CD8-positive, alpha-beta memory T cell (primary cell): ENCODE measurements at regions of chr14 and their contacts with region 1.

Region 1: GRCh38 chr14:52961060-52961639 is 10.3 kb upstream of the FERMT2 start:
- DNase-seq: peak; percentile 16 to 72 (median 53)
- H3K4me3 ChIP-seq: no peak overlapping the region
- H3K4me3 Mint-ChIP-seq: peak overlapping the region in 3 of 7 donors; percentile 21 to 33 (median 30)
- H3K27ac ChIP-seq: no peak overlapping the region
- H3K27ac Mint-ChIP-seq: peak overlapping the region in 7 of 8 donors; percentile 47 to 91 (median 73)
- H3K4me1 ChIP-seq: no peaks in the 10 kb centered on the region
- H3K4me1 Mint-ChIP-seq: peaks cover 11 to 16% (median 14%) of the 10 kb centered on the region in 3 donors
- H3K27me3 ChIP-seq: no peaks in the 10 kb centered on the region
- H3K27me3 Mint-ChIP-seq: no peaks in the 10 kb centered on the region

Region 2: GRCh38 chr14:52824507-52824906 is 136.6 kb before region 1 on chr14:
- CTCF ChIA-PET with region 1: interaction called, 111 read pairs
- POLR2A ChIA-PET with region 1: no interaction called
- DNase-seq: no peak
- H3K4me3 ChIP-seq: no peak overlapping the region
- H3K4me3 Mint-ChIP-seq: peak overlapping the region in 1 of 7 donors; percentile 36
- H3K27ac ChIP-seq: no peak overlapping the region
- H3K27ac Mint-ChIP-seq: peak overlapping the region in 1 of 8 donors; percentile 26
- H3K4me1 ChIP-seq: no peaks in the 10 kb centered on the region
- H3K4me1 Mint-ChIP-seq: peaks cover 0 to 8% (median 6%) of the 10 kb centered on the region in 3 donors
- H3K27me3 ChIP-seq: no peaks in the 10 kb centered on the region
- H3K27me3 Mint-ChIP-seq: peaks cover 5 to 15% of the 10 kb centered on the region in 2 donors

Region 3: GRCh38 chr14:52873694-52874093 is 87.5 kb before region 1 on chr14:
- CTCF ChIA-PET with region 1: no interaction called
- POLR2A ChIA-PET with region 1: no interaction called
- DNase-seq: no peak
- H3K4me3 ChIP-seq: no peak overlapping the region
- H3K4me3 Mint-ChIP-seq: no peak overlapping the region
- H3K27ac ChIP-seq: no peak overlapping the region
- H3K27ac Mint-ChIP-seq: no peak overlapping the region
- H3K4me1 ChIP-seq: no peaks in the 10 kb centered on the region
- H3K4me1 Mint-ChIP-seq: no peaks in the 10 kb centered on the region
- H3K27me3 ChIP-seq: no peaks in the 10 kb centered on the region
- H3K27me3 Mint-ChIP-seq: peaks cover 0 to 10% of the 10 kb centered on the region in 2 donors

Region 4: GRCh38 chr14:52918486-52918885 is 42.7 kb before region 1 on chr14:
- CTCF ChIA-PET with region 1: interaction called, 19 read pairs
- POLR2A ChIA-PET with region 1: no interaction called
- DNase-seq: peak in 3 of 5 donors; percentile 49 to 76 (median 74)
- H3K4me3 ChIP-seq: no peak overlapping the region
- H3K4me3 Mint-ChIP-seq: peak overlapping the region in 4 of 7 donors; percentile 6 to 49 (median 36)
- H3K27ac ChIP-seq: peak overlapping the region; percentile 40
- H3K27ac Mint-ChIP-seq: peak overlapping the region; percentile 66 to 99 (median 94)
- H3K4me1 ChIP-seq: peaks cover 21% of the 10 kb centered on the region
- H3K4me1 Mint-ChIP-seq: peaks cover 28 to 38% (median 34%) of the 10 kb centered on the region in 3 donors
- H3K27me3 ChIP-seq: no peaks in the 10 kb centered on the region
- H3K27me3 Mint-ChIP-seq: peaks cover 0 to 7% of the 10 kb centered on the region in 2 donors

Region 5: DNA sequence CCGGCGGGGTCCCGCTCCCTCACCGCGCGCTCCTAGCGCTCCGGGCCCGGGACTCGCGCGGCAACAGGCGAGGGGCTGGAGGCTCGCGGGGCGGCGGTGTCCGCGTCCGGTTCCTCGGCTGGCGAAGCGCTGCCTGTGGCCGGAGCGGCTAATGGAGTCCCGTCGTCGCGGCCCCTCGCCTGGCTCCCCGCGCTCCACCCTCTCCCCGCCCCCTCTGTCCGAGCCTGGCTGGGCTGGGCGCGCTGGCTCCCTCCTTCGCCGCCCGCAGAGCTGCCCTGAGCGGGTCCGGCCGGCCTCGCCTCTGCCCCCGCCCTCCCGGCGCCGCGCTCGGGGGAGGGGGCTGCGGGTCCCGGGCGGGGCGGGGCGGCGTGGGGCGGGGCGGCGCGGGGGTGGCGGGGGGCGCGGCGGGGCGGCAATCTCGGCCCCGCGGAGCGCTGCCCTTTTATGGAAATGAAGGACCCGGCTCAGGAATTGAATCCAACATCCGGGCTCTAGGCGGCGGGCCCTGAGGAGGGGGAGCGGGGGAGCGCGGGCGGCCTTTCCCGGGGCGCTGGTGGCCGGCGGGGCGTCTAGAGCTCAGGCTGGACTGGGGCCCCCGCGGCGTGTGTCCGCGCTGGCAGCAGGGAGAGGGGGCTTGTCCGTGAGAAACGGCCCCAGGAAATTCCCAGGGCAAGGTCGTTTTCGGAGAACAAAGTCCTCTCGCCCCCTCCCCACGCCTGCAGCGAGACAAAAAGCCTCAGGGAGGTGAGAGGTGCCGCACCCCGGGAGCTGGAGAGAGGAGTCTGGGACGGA is 10.1 kb before region 1 on chr14 and contains the start of gene FERMT2:
- CTCF ChIA-PET with region 1: interaction called, 15 read pairs
- POLR2A ChIA-PET with region 1: no interaction called
- DNase-seq: peak; percentile 1 to 52 (median 8)
- H3K4me3 ChIP-seq: peak within 1 kb of the TSS; percentile 66
- H3K4me3 Mint-ChIP-seq: peak within 1 kb of the TSS; percentile 73 to 93 (median 86)
- H3K27ac ChIP-seq: no peak within 1 kb of the TSS
- H3K27ac Mint-ChIP-seq: peak within 1 kb of the TSS in 6 of 8 donors; percentile 7 to 74 (median 54)
- H3K4me1 ChIP-seq: peaks cover 17% of the 10 kb centered on the region
- H3K4me1 Mint-ChIP-seq: peaks cover 21 to 26% (median 23%) of the 10 kb centered on the region in 3 donors
- H3K27me3 ChIP-seq: peaks cover 45% of the 10 kb centered on the region
- H3K27me3 Mint-ChIP-seq: peaks cover 34 to 58% of the 10 kb centered on the region in 2 donors
- total RNA-seq, gene FERMT2: 0.93 to 1.7 TPM